ENCODE measurements at regions of chr12 and their contacts with region 1.

Region 1: GRCh38 chr12:52004042-52004648 is 2.6 kb upstream of the TAMALIN start:
- DNase-seq: peak; percentile 72 to 82 (median 79)
- H3K4me3 ChIP-seq: no peak overlapping the region
- H3K27ac ChIP-seq: peak overlapping the region in 1 of 2 donors; percentile 30
- H3K4me1 ChIP-seq: peaks cover 7% of the 10 kb centered on the region
- H3K27me3 ChIP-seq: no peaks in the 10 kb centered on the region
- CTCF ChIP-seq: peak; percentile 51 to 87 (median 87)
- EP300 ChIP-seq: no peak
- POLR2A ChIP-seq: no peak

Region 2: GRCh38 chr12:52023182-52023975 is 19.2 kb after region 1 on chr12:
- intact Hi-C with region 1: loop called in 3 of 4 experiments (anchors 2 kb)
- DNase-seq: peak; percentile 88 to 94 (median 93)
- H3K4me3 ChIP-seq: peak overlapping the region; percentile 34
- H3K27ac ChIP-seq: peak overlapping the region in 1 of 2 donors; percentile 9
- H3K4me1 ChIP-seq: peaks cover 8% of the 10 kb centered on the region
- H3K27me3 ChIP-seq: no peaks in the 10 kb centered on the region
- CTCF ChIP-seq: peak; percentile 96 to 99 (median 99)
- EP300 ChIP-seq: no peak
- POLR2A ChIP-seq: peak; percentile 11

Region 3: DNA sequence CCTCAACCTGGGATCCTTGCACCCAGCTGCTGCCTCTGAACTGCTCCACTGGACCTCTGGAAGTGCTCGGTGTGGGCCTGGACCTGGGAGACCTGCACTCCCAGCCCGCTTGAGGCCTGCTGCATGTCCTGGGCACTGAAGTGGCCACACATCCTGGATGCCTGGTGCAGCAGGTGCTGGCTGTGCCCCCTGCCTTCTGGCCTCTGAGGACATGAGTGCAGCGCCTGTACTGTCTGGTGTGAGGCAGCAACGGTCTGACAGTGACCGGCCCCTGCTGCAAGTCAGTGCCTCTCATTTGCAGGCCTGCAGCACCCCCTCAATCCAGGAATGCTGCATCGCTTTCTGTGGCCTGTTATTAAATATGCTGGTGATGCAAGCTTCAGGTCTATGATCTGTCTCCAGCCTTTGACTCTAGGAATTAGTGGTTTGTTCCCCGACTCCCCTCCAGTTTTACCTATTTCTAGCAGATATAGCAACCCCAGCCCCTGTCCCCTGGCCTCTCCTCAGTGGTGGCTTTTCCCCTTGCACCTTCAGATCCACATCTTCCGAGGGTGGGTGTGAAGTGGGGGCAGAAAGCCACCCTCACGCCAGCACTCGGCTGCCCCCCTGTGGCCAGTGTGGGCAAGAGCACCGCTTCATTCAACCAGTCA is 79.0 kb after region 1 on chr12:
- intact Hi-C with region 1: loop called in 1 of 4 experiments (anchors 5 kb)
- DNase-seq: peak; percentile 67 to 83 (median 73)
- H3K4me3 ChIP-seq: no peak overlapping the region
- H3K27ac ChIP-seq: peak overlapping the region; percentile 87 to 88
- H3K4me1 ChIP-seq: peaks cover 19% of the 10 kb centered on the region
- H3K27me3 ChIP-seq: no peaks in the 10 kb centered on the region
- CTCF ChIP-seq: peak; percentile 92 to 98 (median 97)
- EP300 ChIP-seq: no peak
- POLR2A ChIP-seq: peak; percentile 26